K562 (cell line): ENCODE measurements at regions of chr1 and their contacts with region 1.

Region 1: DNA sequence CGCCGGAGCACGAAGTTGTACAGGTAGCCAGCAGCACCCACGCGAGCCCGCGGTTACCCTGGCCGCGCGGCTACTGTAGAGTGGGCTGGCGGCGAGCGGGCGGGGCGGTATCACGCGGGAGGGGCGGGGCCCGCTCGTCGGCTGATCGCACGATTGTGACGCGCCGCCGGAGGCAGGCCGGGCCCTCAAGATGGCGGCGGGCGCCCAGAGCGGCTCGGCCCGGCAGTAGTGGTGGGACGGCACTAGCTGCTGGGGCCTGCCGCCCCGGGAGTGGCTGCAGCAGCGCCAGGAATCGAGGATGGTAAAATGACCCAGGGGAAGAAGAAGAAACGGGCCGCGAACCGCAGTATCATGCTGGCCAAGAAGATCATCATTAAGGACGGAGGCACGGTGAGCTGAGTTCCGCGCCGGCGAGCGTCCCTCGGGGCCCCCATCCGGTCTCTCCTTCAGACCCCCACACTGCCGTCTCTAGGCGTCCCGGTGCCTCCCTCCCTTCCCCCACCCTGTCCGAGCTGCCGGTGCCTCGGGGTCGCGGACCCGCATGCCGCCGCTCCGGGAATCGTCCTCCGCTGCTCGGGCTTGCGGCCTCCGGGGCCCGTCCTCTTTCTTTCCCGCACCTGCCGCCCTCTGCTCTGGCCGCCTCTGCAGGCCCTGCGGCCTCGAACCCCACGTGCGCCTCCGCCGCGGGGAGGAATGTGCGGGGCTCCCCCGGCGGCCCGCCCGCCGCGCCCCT is 68.3 kb downstream of the SLC35A3 start:
- DNase-seq: peak; percentile 88 to 93 (median 91)
- ATAC-seq: peak; percentile 88
- H3K4me3 ChIP-seq: peak overlapping the region; percentile 80
- H3K27ac ChIP-seq: peak overlapping the region; percentile 98
- H3K4me1 ChIP-seq: peaks cover 4 to 11% of the 10 kb centered on the region in 2 experiments; a peak in 4 of 5 replicates
- H3K27me3 ChIP-seq: no peaks in the 10 kb centered on the region
- CTCF ChIP-seq: no peak
- EP300 ChIP-seq: peak; percentile 26; the same call in 1 of the 2 replicates
- POLR2A ChIP-seq: peak; percentile 95
- RAD21 ChIP-seq: no peak

Region 2: DNA sequence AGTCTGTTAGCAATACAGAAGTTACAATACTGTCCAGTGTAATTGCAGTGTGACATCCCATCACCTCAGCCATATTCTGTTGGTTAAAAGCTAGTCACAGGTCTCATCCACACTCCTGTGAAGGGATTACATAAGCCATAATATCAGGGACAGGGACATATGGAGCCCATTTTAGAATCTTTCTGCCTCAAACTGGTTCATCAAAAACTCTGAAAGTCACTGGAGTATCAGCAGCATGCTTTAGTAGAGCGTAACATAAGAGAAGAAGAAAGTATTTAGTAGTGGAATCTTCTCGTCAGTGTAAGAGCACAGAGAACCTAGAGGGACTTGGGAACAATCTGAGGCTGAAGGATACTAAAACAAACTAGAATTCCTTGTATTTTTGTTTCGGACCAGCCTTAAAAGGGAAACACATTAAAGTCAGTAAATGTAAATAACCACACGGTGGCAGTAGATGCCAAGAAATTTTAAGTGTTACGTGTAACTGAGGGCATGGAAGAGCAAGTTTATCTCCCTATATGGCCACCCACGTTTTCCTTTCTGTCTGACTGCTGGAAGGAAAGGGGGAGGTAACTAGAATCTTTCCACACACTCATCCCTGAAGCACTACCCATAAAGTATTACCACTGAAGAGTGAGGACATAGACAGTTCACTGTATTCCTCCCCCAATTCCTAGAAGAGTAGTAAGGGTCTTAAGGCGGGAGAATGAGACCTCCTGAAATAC is 229.5 kb before region 1 on chr1:
- CTCF ChIA-PET with region 1: interaction called, 8 read pairs
- POLR2A ChIA-PET with region 1: interaction called, 3 read pairs
- in situ Hi-C with region 1: loop called (anchors 5 kb)
- intact Hi-C with region 1: loop called (anchors 1 kb)
- DNase-seq: peak; percentile 74 to 93 (median 82)
- ATAC-seq: peak; percentile 95
- H3K4me3 ChIP-seq: no peak overlapping the region
- H3K27ac ChIP-seq: peak overlapping the region; percentile 69
- H3K4me1 ChIP-seq: peaks cover 0 to 11% of the 10 kb centered on the region in 2 experiments; a peak in 2 of 5 replicates
- H3K27me3 ChIP-seq: no peaks in the 10 kb centered on the region
- CTCF ChIP-seq: peak; percentile 54 to 84 (median 70)
- EP300 ChIP-seq: peak; percentile 52
- POLR2A ChIP-seq: no peak
- RAD21 ChIP-seq: peak; percentile 94 to 95

Region 3: GRCh38 chr1:99969729-99970621 is 68.1 kb before region 1 on chr1 and contains the start of gene SLC35A3:
- CTCF ChIA-PET with region 1: no interaction called
- POLR2A ChIA-PET with region 1: interaction called, 4 read pairs
- in situ Hi-C with region 1: no loop called
- intact Hi-C with region 1: loop called (anchors 2 kb)
- DNase-seq: peak; percentile 68 to 87 (median 78)
- ATAC-seq: peak; percentile 94
- H3K4me3 ChIP-seq: peak within 1 kb of the TSS; percentile 80
- H3K27ac ChIP-seq: peak within 1 kb of the TSS; percentile 48
- H3K4me1 ChIP-seq: peaks cover 2 to 17% of the 10 kb centered on the region in 2 experiments; a peak in 3 of 5 replicates
- H3K27me3 ChIP-seq: no peaks in the 10 kb centered on the region
- CTCF ChIP-seq: no peak; a peak in 1 of 6 replicates
- EP300 ChIP-seq: no peak
- POLR2A ChIP-seq: peak; percentile 81
- RAD21 ChIP-seq: peak in 1 of 2 experiments; percentile 9; a peak in 2 of 4 replicates
- polyA plus RNA-seq, gene SLC35A3: 3.5 to 3.7 TPM

Region 4: GRCh38 chr1:100343897-100344296 is 305.8 kb after region 1 on chr1:
- CTCF ChIA-PET with region 1: no interaction called
- POLR2A ChIA-PET with region 1: no interaction called
- in situ Hi-C with region 1: no loop called
- intact Hi-C with region 1: loop called (anchors 5 kb)
- DNase-seq: no peak
- ATAC-seq: peak; percentile 11
- H3K4me3 ChIP-seq: no peak overlapping the region
- H3K27ac ChIP-seq: peak overlapping the region; percentile 48; the same call in 2 of the 3 replicates
- H3K4me1 ChIP-seq: peaks cover 10 to 53% of the 10 kb centered on the region in 2 experiments
- H3K27me3 ChIP-seq: no peaks in the 10 kb centered on the region
- CTCF ChIP-seq: no peak
- EP300 ChIP-seq: no peak
- POLR2A ChIP-seq: no peak
- RAD21 ChIP-seq: no peak